Activated naive CD4-positive, alpha-beta T cell treated with anti-CD3 and anti-CD28 coated beads, Interleukin-2, amount 10 ng/mL, durations not matched to agents 7 days and 5 days (primary cell): ENCODE measurements at regions of chr4 and their contacts with region 1.

Region 1: DNA sequence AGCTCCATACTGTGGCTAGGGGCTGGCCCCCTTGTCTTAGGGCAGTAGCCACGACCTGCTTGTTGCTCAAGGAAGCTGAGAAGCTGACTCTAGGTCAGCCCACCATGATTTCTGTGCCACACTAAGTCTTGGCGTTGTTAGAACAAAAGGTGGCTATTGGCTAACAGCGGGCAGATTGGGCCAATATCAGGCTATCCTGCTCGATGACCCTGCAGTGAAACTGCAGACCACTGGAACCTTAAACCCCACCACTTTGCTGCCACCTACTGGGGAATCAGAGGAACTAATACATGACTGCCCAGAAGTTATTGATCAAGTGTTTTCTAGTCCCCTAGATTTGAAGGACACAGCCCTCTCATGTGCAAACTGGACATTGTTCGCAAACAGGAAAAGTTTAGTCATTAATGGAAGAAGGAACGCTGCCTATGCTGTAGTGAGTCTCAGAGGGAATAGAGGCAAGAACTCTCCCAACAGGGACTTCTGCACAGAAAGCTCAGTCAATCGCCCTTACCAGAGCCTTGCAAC is 17.0 kb upstream of the PAPSS1 start:
- DNase-seq: peak; percentile 51
- H3K4me3 Mint-ChIP-seq: no peak overlapping the region
- H3K27ac Mint-ChIP-seq: no peak overlapping the region
- H3K4me1 Mint-ChIP-seq: no peaks in the 10 kb centered on the region
- H3K27me3 Mint-ChIP-seq: no peaks in the 10 kb centered on the region

Region 2: DNA sequence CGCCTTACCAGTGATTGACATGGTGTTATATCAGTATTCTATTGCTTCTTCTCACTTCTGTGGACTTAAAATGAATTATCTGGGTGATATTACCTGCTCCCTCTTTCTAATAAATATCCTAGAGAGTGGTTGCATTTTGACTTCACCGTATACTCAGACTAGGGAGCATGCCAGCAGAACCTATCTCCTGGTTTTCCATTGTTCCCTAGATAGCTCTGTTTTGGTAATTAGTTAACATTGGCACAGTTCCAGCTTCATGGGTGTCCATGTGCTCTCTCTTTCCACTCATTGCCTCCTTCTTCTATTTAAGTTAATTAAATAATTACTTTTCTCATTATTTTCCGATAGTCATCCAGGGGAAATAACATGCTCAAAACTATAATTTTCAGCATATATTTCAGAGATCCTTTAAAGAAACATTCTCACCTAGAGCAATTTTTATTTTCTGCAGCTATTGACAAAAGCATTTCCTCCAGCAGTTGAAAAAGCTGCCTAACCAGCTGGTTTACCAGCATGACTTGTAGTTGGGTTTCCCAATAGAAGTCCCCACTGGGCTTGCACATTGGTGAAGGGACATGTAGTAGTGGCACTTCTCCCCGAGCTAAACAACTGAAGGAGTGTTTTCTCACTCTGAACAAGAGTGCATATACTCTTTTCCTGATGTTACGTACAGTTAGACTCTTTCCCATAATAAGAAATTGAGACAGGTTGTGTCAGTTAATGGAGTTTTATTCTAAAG is 10.9 kb after region 1 on chr4:
- CTCF ChIA-PET with region 1: interaction called, 25 read pairs
- DNase-seq: no peak
- H3K4me3 Mint-ChIP-seq: no peak overlapping the region
- H3K27ac Mint-ChIP-seq: no peak overlapping the region
- H3K4me1 Mint-ChIP-seq: no peaks in the 10 kb centered on the region
- H3K27me3 Mint-ChIP-seq: peaks cover 22% of the 10 kb centered on the region